Activated CD8-positive, alpha-beta T cell treated with anti-CD3 and anti-CD28 coated beads for 36 hours (primary cell): ENCODE measurements at regions of chr10 and their contacts with region 1.

Region 1: GRCh38 chr10:13074561-13075451 is 25.2 kb upstream of the OPTN start:
- DNase-seq: peak; percentile 76
- ATAC-seq: peak; percentile 69
- H3K4me3 Mint-ChIP-seq: no peak overlapping the region
- H3K27ac Mint-ChIP-seq: no peak overlapping the region
- H3K4me1 Mint-ChIP-seq: no peaks in the 10 kb centered on the region
- H3K27me3 Mint-ChIP-seq: peaks cover 12% of the 10 kb centered on the region
- CTCF ChIP-seq: peak; percentile 83

Region 2: GRCh38 chr10:12907656-12908055 is 167.2 kb before region 1 on chr10:
- CTCF ChIA-PET with region 1: interaction called, 7 read pairs
- POLR2A ChIA-PET with region 1: no interaction called
- intact Hi-C with region 1: loop called (anchors 5 kb)
- DNase-seq: no peak
- ATAC-seq: no peak
- H3K4me3 Mint-ChIP-seq: no peak overlapping the region
- H3K27ac Mint-ChIP-seq: no peak overlapping the region
- H3K4me1 Mint-ChIP-seq: no peaks in the 10 kb centered on the region
- H3K27me3 Mint-ChIP-seq: peaks cover 7% of the 10 kb centered on the region
- CTCF ChIP-seq: no peak

Region 3: GRCh38 chr10:13062803-13063202 is 12.0 kb before region 1 on chr10:
- CTCF ChIA-PET with region 1: interaction called, 17 read pairs
- POLR2A ChIA-PET with region 1: no interaction called
- intact Hi-C with region 1: no loop called
- DNase-seq: no peak
- ATAC-seq: no peak
- H3K4me3 Mint-ChIP-seq: no peak overlapping the region
- H3K27ac Mint-ChIP-seq: no peak overlapping the region
- H3K4me1 Mint-ChIP-seq: no peaks in the 10 kb centered on the region
- H3K27me3 Mint-ChIP-seq: peaks cover 16% of the 10 kb centered on the region
- CTCF ChIP-seq: no peak